Endothelial cell of umbilical vein (primary cell): ENCODE measurements at regions of chr11 and their contacts with region 1.

Region 1: DNA sequence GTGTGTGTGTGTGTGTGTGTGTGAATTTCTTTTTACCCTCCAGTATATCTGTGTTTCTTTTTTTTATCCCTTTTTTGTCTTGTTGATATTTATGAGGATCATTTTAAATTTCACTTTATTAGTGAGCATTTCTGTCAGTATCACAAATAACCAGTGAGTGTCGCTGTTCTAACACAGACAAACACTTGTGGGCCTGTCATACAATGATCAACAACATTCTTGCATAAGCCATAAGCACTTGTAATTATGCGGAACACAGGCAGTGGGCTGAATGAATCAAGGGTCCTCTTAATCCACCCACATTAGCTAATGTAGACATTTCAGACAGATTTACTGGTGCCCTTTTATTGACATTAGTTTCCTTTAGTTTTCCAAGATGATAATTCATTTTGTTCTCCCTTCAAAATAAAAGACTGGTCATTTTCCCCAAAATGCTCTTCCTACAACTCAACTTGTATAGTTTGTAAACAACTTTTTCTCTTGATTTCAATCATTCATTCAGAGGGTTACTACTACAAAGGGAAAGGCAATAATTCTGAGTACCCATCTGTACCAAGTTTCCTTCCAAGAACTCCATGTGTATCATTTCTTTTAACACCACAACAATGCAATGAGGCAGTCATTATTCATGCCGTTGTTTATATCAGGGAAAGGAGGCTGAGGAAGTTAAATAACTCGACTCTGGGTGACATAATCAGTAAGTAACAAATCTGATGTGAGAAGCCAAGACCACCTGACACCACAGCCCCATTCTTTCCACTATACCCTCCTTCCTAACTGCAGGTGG is 34.5 kb upstream of the ANO3 start:
- DNase-seq: peak; percentile 52
- H3K4me3 ChIP-seq: no peak overlapping the region
- H3K27ac ChIP-seq: no peak overlapping the region
- H3K4me1 ChIP-seq: no peaks in the 10 kb centered on the region
- H3K27me3 ChIP-seq: peaks cover 2 to 5% of the 10 kb centered on the region in 2 experiments
- CTCF ChIP-seq: peak; percentile 49 to 57
- POLR2A ChIP-seq: no peak

Region 2: DNA sequence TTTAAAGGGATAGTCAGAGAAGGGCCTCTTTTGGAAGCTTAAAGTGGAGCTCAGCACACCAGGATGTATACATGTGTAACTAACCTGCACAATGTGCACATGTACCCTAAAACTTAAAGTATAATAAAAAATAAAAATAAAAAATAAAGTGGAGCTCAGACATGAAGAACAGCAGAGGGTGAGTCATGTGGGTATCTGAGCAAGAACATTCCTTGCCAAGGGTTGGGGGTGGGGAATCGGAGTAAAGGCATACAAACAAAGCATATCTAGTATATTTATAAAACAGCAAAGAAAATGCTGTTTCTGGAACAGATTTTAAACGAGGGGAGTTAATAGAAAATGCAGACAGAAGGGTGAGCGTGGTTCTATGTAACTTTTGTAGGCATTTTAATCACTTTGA is 528.1 kb before region 1 on chr11:
- CTCF ChIA-PET with region 1: no interaction called
- POLR2A ChIA-PET with region 1: no interaction called
- dilution Hi-C with region 1: no loop called
- intact Hi-C with region 1: no loop called
- DNase-seq: no peak
- H3K4me3 ChIP-seq: no peak overlapping the region
- H3K27ac ChIP-seq: no peak overlapping the region
- H3K4me1 ChIP-seq: no peaks in the 10 kb centered on the region
- H3K27me3 ChIP-seq: no peaks in the 10 kb centered on the region
- CTCF ChIP-seq: no peak
- POLR2A ChIP-seq: no peak

Region 3: GRCh38 chr11:26025680-26026477 is 271.5 kb before region 1 on chr11:
- CTCF ChIA-PET with region 1: no interaction called
- POLR2A ChIA-PET with region 1: no interaction called
- dilution Hi-C with region 1: no loop called
- intact Hi-C with region 1: no loop called
- DNase-seq: no peak
- H3K4me3 ChIP-seq: no peak overlapping the region
- H3K27ac ChIP-seq: no peak overlapping the region
- H3K4me1 ChIP-seq: no peaks in the 10 kb centered on the region
- H3K27me3 ChIP-seq: peaks cover 0 to 2% of the 10 kb centered on the region in 2 experiments
- CTCF ChIP-seq: no peak
- POLR2A ChIP-seq: no peak

Region 4: DNA sequence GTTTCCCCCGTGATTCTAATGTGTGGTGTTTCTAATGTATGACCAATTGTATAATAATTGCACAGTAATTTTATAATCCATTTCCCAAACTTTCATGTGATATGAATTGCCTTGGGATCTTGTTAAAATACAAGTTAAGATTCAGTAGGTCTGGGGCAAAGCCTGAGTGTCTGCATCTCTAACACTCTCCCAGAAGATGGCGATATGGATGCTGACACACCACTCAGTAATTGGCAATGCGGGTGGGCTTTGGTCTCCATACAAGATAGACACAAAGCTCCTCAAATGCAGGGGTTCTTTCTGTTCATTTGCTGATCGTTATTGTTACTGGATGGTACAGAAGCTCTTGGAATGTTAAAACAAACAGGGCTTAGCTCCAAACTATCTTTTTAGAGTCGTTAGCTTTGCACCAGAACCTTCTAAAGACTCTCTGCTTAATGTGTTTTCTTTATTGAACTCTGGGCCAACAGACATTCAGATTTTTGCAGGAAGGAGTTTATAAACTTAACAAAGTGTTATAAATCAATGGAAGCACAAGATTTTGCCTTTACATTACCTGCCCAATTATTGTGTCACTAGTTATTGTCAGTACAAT is 10.8 kb before region 1 on chr11:
- CTCF ChIA-PET with region 1: interaction called, 18 read pairs
- POLR2A ChIA-PET with region 1: no interaction called
- dilution Hi-C with region 1: no loop called
- intact Hi-C with region 1: no loop called
- DNase-seq: peak; percentile 37
- H3K4me3 ChIP-seq: no peak overlapping the region
- H3K27ac ChIP-seq: no peak overlapping the region
- H3K4me1 ChIP-seq: peaks cover 7% of the 10 kb centered on the region
- H3K27me3 ChIP-seq: no peaks in the 10 kb centered on the region
- CTCF ChIP-seq: peak; percentile 21 to 59
- POLR2A ChIP-seq: no peak

Region 5: DNA sequence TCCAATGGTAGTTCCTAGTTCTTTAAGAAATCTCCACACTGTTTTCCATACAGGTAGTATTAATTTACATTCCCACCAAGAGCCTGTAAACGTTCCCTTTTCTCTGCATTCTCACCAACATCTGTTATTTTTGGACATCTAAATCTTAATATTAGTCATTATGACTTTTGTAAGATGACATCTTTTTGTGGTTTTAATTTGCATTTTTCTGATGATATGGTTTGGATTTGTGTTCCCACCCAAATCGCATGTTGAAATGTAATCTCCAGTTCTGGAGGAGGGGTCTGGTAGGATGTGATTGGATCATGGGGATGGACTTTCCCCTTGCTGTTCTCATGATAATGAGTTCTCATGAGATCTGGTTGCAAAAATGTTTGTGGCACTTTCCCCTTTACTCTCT is 185.7 kb after region 1 on chr11:
- CTCF ChIA-PET with region 1: no interaction called
- POLR2A ChIA-PET with region 1: no interaction called
- dilution Hi-C with region 1: no loop called
- intact Hi-C with region 1: no loop called
- DNase-seq: no peak
- H3K4me3 ChIP-seq: no peak overlapping the region
- H3K27ac ChIP-seq: no peak overlapping the region
- H3K4me1 ChIP-seq: no peaks in the 10 kb centered on the region
- H3K27me3 ChIP-seq: no peaks in the 10 kb centered on the region
- CTCF ChIP-seq: no peak
- POLR2A ChIP-seq: no peak

Region 6: GRCh38 chr11:26551186-26551801 is 253.9 kb after region 1 on chr11:
- CTCF ChIA-PET with region 1: no interaction called
- POLR2A ChIA-PET with region 1: no interaction called
- dilution Hi-C with region 1: no loop called
- intact Hi-C with region 1: loop called (anchors 1 kb)
- DNase-seq: no peak
- H3K4me3 ChIP-seq: no peak overlapping the region
- H3K27ac ChIP-seq: no peak overlapping the region
- H3K4me1 ChIP-seq: no peaks in the 10 kb centered on the region
- H3K27me3 ChIP-seq: no peaks in the 10 kb centered on the region
- CTCF ChIP-seq: peak in 1 of 2 donors; percentile 1
- POLR2A ChIP-seq: no peak

Region 7: DNA sequence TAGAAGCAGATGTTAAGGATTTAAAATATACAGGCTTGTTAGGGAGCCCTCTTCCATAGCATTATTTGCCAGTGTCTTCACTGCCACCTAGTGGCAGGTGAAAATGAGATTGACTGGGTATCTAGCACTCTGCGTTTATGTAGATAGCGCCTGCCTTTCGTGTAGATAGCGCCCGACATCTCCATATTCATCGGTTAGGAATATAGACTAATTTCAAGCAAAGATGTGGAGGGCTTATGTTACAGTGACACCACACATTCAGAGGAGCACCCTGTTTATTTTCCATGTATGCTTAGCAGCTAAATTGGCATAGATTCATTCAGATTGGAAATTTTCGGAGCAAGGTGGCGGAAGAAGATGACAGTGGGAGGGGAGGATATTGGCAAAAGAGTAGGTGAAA is 352.5 kb after region 1 on chr11:
- CTCF ChIA-PET with region 1: interaction called, 8 read pairs
- POLR2A ChIA-PET with region 1: no interaction called
- dilution Hi-C with region 1: no loop called
- intact Hi-C with region 1: loop called (anchors 1 kb)
- DNase-seq: peak; percentile 63
- H3K4me3 ChIP-seq: no peak overlapping the region
- H3K27ac ChIP-seq: no peak overlapping the region
- H3K4me1 ChIP-seq: no peaks in the 10 kb centered on the region
- H3K27me3 ChIP-seq: no peaks in the 10 kb centered on the region
- CTCF ChIP-seq: peak; percentile 49 to 61
- POLR2A ChIP-seq: no peak